SK-N-SH (cell line): ENCODE measurements at regions of chr5 and their contacts with region 1.

Region 1: GRCh38 chr5:13987843-13988464 is 43.5 kb upstream of the DNAH5 start:
- DNase-seq: peak; percentile 73
- H3K4me3 ChIP-seq: peak overlapping the region in 1 of 2 experiments; percentile 5; a peak in 1 of 4 replicates
- H3K27ac ChIP-seq: no peak overlapping the region
- H3K4me1 ChIP-seq: peaks cover 0 to 2% of the 10 kb centered on the region in 2 experiments; a peak in 1 of 4 replicates
- H3K27me3 ChIP-seq: no peaks in the 10 kb centered on the region
- CTCF ChIP-seq: peak; percentile 95
- EP300 ChIP-seq: no peak
- RAD21 ChIP-seq: peak; percentile 97

Region 2: DNA sequence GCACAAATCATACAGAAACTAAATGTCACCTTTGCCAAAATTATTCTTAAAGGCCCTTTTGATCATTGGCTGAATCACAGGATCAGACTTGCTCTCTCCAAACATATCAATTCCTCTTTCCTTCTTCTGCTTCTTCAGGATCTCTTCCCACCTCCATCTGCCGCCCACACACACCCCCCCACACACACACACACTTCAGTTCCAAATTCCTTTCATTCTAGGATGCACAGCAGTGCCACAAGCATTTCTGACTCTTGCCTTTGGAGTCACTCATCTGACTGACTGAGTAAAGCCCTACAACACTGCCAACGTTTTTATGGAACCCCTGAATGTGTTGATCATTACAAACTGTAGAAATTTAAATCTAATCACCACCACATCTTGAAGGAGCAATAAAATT is 66.4 kb before region 1 on chr5:
- CTCF ChIA-PET with region 1: no interaction called
- POLR2A ChIA-PET with region 1: no interaction called
- DNase-seq: no peak
- H3K4me3 ChIP-seq: no peak overlapping the region
- H3K27ac ChIP-seq: no peak overlapping the region
- H3K4me1 ChIP-seq: no peaks in the 10 kb centered on the region
- H3K27me3 ChIP-seq: no peaks in the 10 kb centered on the region
- CTCF ChIP-seq: no peak
- EP300 ChIP-seq: no peak
- RAD21 ChIP-seq: no peak

Region 3: DNA sequence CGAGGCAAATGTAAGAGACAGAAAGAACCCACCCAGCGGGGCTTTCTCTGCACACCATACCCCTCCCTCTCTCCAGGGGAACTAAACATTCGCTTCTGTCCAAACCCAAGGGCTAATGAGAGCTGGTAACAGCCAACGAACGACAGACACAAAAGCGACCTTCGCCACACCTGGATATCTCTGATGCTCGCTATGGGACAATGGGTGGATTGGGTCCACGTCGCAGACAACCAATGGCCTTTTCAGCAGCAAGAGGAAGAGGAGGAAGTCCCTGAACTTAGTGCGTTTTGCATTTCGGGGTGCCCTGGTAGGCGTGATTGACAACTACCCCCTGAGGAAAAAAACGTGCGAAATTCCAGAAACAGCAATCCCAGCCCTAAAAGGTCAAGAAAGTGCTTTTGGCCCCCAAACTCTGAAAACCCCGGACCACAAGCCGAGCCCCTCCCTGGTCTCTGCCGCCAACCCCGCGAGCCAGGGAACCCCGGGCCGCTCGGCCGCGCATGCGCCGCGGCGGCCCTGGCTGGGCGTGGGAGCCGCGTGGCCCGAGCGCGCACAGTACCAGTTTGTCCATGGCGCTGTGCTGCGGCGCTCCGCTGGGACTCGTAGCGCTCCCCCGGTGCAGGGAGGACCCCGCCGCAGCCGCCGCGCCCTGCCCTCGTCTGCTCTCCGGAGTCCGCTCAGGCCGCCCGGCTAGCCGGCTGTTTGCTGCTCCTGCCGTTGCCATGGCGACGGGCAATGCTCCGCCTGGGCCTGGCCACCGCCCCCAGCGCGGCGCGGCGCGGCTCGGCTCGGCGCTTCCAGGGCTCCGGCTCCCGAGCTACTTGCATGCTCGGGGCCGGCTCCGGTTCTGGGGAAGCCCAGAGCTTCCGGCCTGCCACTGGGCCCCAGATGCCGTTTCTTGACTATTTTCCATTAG is 23.4 kb after region 1 on chr5:
- CTCF ChIA-PET with region 1: interaction called, 21 read pairs
- POLR2A ChIA-PET with region 1: no interaction called
- DNase-seq: peak; percentile 93
- H3K4me3 ChIP-seq: peak overlapping the region; percentile 57 to 62
- H3K27ac ChIP-seq: peak overlapping the region; percentile 79 to 80
- H3K4me1 ChIP-seq: no peaks in the 10 kb centered on the region; a peak in 2 of 4 replicates
- H3K27me3 ChIP-seq: no peaks in the 10 kb centered on the region
- CTCF ChIP-seq: 0 out of 2 replicates have a peak, but pooled peaks have one; percentile 10
- EP300 ChIP-seq: no peak
- RAD21 ChIP-seq: no peak

Region 4: DNA sequence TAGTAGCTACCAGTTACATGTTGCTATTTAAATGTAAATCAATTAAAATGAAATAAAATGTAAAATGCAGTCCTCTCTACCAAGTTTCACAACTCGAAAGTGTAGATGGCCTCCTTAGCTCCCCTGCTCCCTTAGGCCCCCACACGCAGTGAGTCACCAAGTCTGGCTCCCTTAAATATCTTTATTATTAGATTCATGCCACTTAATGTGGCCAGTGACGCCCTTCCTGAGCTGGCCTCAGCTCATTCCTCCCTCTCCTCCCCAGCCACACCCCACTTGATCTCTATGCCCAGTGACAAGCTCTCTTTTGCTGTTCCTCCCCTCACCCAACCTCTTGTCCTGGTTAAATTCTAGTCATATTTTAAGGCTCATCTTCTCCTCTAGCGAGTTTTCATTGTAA is 45.0 kb after region 1 on chr5:
- CTCF ChIA-PET with region 1: no interaction called
- POLR2A ChIA-PET with region 1: no interaction called
- DNase-seq: no peak
- H3K4me3 ChIP-seq: no peak overlapping the region
- H3K27ac ChIP-seq: peak overlapping the region in 1 of 2 experiments; percentile 45; a peak in 2 of 4 replicates
- H3K4me1 ChIP-seq: peaks cover 0 to 36% of the 10 kb centered on the region in 2 experiments; a peak in 3 of 4 replicates
- H3K27me3 ChIP-seq: no peaks in the 10 kb centered on the region
- CTCF ChIP-seq: no peak
- EP300 ChIP-seq: no peak
- RAD21 ChIP-seq: no peak

Region 5: DNA sequence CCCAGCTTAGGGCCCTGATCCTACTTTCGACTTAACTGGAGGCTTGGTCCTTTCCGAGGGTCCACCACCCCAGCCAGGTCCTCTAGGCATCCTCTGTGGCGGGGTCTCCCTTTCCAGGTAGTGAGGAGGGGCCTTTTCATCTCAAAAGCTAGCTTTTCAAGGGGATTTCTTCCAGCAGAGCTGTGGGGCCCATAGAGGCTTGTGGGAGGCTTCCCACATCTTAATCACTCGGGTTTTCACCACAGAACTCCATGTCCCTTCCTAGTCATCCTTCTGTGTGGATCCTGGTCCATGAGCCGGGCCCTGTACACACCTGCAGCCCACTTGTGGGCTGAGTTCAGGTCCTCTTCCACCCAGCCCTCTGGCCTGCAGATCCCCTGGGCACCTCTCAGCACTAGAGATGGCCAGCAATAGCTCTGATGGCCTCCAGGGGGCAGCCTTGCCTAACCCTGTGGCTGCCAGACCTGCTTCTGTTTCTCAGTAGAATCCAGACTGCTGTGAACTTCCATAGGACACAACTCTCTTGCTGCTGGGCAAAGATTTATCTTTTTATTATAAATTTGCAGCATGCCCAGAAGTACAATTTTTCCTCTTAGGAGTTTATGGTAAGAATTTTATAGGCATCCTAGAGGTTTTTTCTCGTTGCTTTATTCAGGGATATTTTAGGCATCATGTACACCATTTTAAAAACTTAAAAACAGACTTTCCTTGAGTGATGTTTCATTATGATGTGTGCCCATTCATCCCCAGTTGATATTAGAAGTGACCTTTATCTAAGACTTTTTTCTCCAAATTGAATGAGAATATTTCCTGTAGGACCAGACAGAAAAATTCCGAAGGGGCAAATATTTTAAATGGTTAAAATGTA is 364.1 kb after region 1 on chr5:
- CTCF ChIA-PET with region 1: interaction called, 13 read pairs
- POLR2A ChIA-PET with region 1: no interaction called
- DNase-seq: peak; percentile 83
- H3K4me3 ChIP-seq: no peak overlapping the region
- H3K27ac ChIP-seq: no peak overlapping the region
- H3K4me1 ChIP-seq: peaks cover 6 to 11% of the 10 kb centered on the region in 2 experiments; a peak in 2 of 4 replicates
- H3K27me3 ChIP-seq: no peaks in the 10 kb centered on the region
- CTCF ChIP-seq: peak; percentile 95
- EP300 ChIP-seq: no peak
- RAD21 ChIP-seq: peak; percentile 88